CD8-positive, alpha-beta T cell (primary cell): ENCODE measurements at regions of chr3 and their contacts with region 1.

Region 1: DNA sequence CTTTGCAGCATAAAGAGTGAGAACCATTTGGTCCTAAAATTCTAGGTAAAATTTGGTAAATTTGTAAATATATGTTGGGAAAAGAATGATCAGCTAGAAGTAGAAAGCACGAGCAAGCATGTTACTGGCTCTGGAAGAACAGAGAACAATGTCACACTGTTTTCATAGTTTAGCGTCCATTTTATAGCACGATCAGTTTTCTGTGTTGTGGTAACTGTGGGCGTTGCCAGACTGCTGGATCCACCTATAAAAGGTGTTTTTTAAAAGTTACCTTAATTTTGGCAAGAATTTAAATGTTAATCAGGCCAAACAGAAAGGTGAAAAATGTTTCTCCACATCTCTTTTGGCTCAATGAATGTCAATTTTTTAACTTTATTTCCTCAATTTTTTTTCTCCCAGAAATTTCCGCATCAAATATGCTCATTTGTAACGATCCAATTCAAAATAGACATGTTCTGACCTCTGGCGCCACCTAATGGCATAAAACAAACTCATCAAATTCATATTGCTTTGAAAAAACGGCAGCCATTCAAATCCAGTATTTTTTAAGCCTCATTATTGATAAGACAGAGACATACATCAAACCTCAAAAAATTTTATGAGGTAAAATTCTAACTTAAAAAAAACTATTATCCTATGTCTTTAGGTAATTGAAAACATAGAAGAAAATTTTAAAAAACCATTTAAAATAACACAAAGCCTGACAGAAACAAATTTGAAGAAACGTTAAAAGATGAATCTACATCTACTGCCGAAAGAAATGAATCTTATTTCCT is 5.5 kb upstream of the GP5 start:
- DNase-seq: peak in 4 of 9 experiments; percentile 37 to 75 (median 58)
- ATAC-seq: peak; percentile 66
- H3K4me3 ChIP-seq: no peak overlapping the region
- H3K4me3 Mint-ChIP-seq: no peak overlapping the region
- H3K27ac ChIP-seq: no peak overlapping the region
- H3K27ac Mint-ChIP-seq: no peak overlapping the region
- H3K4me1 ChIP-seq: peaks cover 7% of the 10 kb centered on the region
- H3K4me1 Mint-ChIP-seq: peaks cover 7% of the 10 kb centered on the region
- H3K27me3 ChIP-seq: no peaks in the 10 kb centered on the region
- H3K27me3 Mint-ChIP-seq: peaks cover 2% of the 10 kb centered on the region
- CTCF ChIP-seq: peak; percentile 88

Region 2: GRCh38 chr3:193665370-193665989 is 739.1 kb before region 1 on chr3:
- CTCF ChIA-PET with region 1: no interaction called
- POLR2A ChIA-PET with region 1: no interaction called
- intact Hi-C with region 1: loop called in 1 of 2 experiments (anchors 10 kb)
- DNase-seq: peak in 2 of 9 experiments; percentile 34 to 53
- ATAC-seq: no peak
- H3K4me3 ChIP-seq: no peak overlapping the region
- H3K4me3 Mint-ChIP-seq: no peak overlapping the region
- H3K27ac ChIP-seq: no peak overlapping the region
- H3K27ac Mint-ChIP-seq: no peak overlapping the region
- H3K4me1 ChIP-seq: no peaks in the 10 kb centered on the region
- H3K4me1 Mint-ChIP-seq: no peaks in the 10 kb centered on the region
- H3K27me3 ChIP-seq: no peaks in the 10 kb centered on the region
- H3K27me3 Mint-ChIP-seq: no peaks in the 10 kb centered on the region
- CTCF ChIP-seq: peak; percentile 76

Region 3: DNA sequence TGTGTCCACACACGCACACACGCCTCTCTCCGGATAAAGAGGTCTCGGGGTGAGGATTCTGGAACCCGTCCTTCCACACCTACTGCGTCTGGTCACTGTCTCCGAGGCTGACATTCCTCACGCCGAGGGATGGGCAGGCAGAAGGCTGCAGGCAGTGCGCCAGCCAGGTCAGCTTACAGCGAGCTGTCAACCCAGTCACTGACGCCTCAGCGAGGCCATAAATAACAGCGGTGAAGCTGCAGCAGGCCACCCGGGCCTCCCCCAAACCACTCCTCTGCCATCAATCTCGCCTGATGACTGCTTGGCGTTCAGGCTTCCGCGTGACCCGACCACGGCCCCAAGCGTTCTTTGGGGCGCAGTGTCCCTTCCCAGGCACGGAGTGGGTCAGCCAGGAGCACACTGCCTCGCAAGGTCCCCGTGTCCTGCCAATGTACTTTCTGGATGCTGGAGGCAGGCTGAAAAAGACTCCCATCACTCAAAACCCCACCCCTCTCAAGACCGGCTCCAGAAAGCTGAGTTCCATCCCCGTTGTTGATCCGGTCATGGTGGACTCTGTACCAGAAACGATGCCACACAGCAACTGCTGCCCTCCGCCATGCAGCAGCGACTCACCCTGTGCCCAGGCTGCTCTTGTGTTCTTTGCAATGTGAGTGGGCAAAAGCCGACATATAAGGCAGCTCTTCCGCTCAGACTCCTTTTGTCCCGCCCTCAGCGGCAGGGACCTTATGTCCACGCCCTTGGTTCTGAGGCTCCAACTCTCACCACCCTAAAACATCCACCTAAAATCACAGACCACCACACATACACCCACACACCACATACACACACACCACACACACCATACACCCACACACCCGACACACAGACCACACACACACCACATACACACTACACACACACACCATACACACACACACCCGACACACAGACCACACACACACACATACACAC is 80.5 kb before region 1 on chr3:
- CTCF ChIA-PET with region 1: interaction called, 12 read pairs
- POLR2A ChIA-PET with region 1: no interaction called
- intact Hi-C with region 1: no loop called
- DNase-seq: peak in 8 of 9 experiments; percentile 20 to 66 (median 34)
- ATAC-seq: peak; percentile 82
- H3K4me3 ChIP-seq: peak overlapping the region; percentile 40 to 46
- H3K4me3 Mint-ChIP-seq: no peak overlapping the region
- H3K27ac ChIP-seq: no peak overlapping the region
- H3K27ac Mint-ChIP-seq: no peak overlapping the region
- H3K4me1 ChIP-seq: peaks cover 3% of the 10 kb centered on the region
- H3K4me1 Mint-ChIP-seq: no peaks in the 10 kb centered on the region
- H3K27me3 ChIP-seq: peaks cover 0 to 24% of the 10 kb centered on the region in 2 experiments
- H3K27me3 Mint-ChIP-seq: peaks cover 3% of the 10 kb centered on the region
- CTCF ChIP-seq: no peak

Region 4: DNA sequence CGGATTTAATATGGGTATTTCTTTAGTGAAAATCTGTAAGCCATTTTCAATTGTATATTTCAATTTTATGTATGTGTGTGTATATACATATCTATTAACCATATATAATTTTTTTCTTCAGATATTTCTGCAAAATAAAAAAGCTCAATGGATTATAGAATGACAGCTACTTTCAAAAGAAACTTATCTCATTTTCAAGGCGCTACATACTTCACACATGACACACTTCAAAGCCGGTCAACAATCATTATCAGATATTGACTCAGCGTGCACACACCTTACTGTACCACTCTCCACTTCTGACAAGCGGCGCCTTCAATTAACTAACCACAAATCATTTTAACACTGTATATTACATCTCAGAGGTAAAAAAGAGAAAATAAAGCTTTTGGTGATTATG is 42.6 kb after region 1 on chr3:
- CTCF ChIA-PET with region 1: no interaction called
- POLR2A ChIA-PET with region 1: no interaction called
- intact Hi-C with region 1: no loop called
- DNase-seq: no peak
- ATAC-seq: peak; percentile 23
- H3K4me3 ChIP-seq: no peak overlapping the region
- H3K4me3 Mint-ChIP-seq: no peak overlapping the region
- H3K27ac ChIP-seq: no peak overlapping the region
- H3K27ac Mint-ChIP-seq: no peak overlapping the region
- H3K4me1 ChIP-seq: no peaks in the 10 kb centered on the region
- H3K4me1 Mint-ChIP-seq: no peaks in the 10 kb centered on the region
- H3K27me3 ChIP-seq: no peaks in the 10 kb centered on the region
- H3K27me3 Mint-ChIP-seq: no peaks in the 10 kb centered on the region
- CTCF ChIP-seq: no peak